ENCODE measurements at regions of chr11 and their contacts with region 1.

Region 1: DNA sequence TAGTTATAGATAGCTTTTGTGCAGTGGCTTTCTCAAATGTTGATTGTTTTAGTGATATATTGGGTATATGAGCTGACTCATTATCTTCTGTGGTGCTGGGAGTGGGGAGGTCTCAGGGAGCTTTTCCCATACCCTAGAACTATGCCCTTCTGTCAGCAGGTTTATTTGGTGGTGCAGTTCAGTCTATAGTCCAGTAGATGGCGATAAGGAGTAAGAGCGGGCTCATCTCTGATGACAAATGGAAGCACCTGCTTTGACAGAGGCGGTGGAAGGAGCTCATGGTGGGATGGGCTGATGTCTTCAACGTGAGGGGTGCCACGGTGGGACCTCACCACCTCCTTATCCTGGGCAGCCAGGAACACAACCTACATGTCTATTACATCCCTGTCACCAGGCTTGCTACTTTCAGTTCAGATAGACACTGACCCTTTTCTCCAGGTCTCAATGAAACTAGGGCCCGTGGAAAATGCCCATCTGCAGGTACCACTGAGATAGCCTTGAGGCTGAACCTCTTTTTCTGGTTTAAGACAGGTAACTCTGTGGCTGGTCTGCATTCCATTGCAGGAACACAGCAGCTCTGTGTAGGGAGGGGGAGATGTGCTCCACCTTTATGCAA is 13.0 kb upstream of the OR6A2 start:
- DNase-seq: no peak
- H3K4me3 ChIP-seq: no peak overlapping the region
- H3K27ac ChIP-seq: no peak overlapping the region
- H3K27me3 ChIP-seq: no peaks in the 10 kb centered on the region
- CTCF ChIP-seq: peak; percentile 98

Region 2: DNA sequence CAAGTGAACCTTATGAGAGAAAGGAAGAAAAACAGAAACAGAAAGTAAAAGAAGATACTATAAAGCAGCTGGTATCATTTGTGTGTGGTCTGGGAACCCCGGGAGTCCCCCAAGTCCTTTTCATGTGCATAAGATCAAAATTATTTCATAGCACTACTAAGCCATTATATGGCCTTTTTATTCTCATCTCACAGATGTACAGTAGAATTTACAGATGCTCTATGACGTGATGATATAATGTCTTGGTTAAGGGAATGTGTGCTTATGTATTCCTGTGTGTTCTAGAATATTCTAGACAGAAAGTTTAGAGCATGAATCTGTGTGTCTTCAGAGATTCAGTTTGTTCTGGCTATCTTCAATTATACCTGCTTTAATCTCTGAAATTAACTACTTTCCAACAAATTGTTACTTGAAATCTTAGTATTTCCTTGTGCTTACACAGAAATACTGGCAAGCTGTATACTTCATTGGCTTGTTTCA is 184.7 kb before region 1 on chr11:
- CTCF ChIA-PET with region 1: no interaction called
- POLR2A ChIA-PET with region 1: no interaction called
- DNase-seq: no peak
- H3K4me3 ChIP-seq: no peak overlapping the region
- H3K27ac ChIP-seq: no peak overlapping the region
- H3K27me3 ChIP-seq: no peaks in the 10 kb centered on the region
- CTCF ChIP-seq: no peak

Region 3: DNA sequence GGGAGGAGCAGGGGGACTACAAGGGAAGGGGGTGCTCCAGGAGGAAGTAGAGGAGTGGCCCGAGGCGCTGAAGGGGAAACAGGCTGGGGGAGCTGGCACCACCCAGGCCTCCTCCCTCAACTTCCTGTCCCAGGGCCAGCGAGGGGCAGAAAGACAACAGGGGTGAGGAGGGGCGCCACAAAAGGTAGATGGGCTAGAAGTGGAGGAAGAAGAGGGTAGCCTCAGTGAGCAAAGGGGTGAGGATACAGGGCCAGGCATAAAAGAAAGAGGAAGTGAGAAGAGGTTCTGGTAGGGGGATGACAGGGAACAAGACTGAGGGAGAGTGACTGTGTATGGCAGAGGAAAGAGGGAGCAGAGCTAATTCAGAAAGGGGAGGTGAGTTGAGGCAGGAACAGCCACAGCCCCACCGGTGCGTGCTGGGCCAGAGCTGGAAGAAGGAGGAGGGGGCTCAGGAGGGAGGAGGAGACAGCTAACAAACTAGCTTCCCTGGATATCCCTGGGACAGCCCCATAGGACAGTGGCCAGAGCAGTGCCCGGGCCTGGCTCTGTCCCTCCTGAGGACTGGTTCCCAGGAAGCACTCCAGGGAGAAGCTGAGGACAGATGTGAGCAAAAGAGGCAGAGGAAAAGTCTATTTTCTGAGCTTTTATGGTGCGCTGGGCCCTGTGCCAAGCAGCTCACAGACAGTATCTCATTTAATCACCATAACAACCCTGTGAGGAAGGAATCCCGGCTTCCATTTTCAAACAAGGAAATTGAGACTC is 165.4 kb before region 1 on chr11:
- CTCF ChIA-PET with region 1: no interaction called
- POLR2A ChIA-PET with region 1: no interaction called
- DNase-seq: no peak
- H3K4me3 ChIP-seq: no peak overlapping the region
- H3K27ac ChIP-seq: no peak overlapping the region
- H3K27me3 ChIP-seq: peaks cover 5% of the 10 kb centered on the region
- CTCF ChIP-seq: no peak

Region 4: DNA sequence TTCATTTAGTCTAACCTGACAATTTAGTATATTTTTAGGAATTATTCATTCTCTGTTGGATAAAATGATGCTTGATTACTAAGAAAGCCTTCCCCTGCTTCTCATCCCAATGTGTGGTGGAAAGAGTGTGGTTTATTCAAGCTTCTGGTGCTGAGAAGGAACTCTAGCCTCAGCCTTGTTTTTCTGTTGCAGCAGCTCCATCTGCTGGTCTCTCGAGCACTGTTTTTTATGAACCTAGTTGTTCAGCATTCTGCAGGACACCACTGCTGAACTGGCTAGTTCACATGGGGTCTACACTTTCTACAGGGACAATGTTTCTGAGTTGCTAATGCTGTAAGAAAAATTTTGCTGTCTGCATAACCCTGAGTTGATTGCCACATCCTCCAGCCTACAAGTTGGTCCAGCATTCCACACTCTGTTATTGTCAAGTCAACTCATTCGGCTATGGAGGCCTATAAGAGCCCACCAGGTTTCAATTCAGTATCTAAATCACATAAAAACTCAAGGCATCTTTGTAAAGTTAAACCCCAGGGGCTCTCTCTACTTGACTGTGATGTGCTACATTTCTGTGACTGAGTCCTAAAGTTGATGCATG is 55.0 kb before region 1 on chr11:
- CTCF ChIA-PET with region 1: interaction called, 10 read pairs
- POLR2A ChIA-PET with region 1: no interaction called
- DNase-seq: peak; percentile 15
- H3K4me3 ChIP-seq: no peak overlapping the region
- H3K27ac ChIP-seq: no peak overlapping the region
- H3K27me3 ChIP-seq: no peaks in the 10 kb centered on the region
- CTCF ChIP-seq: peak; percentile 74

Region 5: GRCh38 chr11:6799402-6799801 is 13.1 kb before region 1 on chr11 and contains the start of gene OR6A2:
- CTCF ChIA-PET with region 1: interaction called, 23 read pairs
- POLR2A ChIA-PET with region 1: no interaction called
- DNase-seq: no peak
- H3K4me3 ChIP-seq: no peak within 1 kb of the TSS
- H3K27ac ChIP-seq: no peak within 1 kb of the TSS
- H3K27me3 ChIP-seq: no peaks in the 10 kb centered on the region
- CTCF ChIP-seq: no peak
- polyA plus RNA-seq, gene OR6A2: 0.02 and 0.06 TPM in 2 replicates

Region 6: GRCh38 chr11:6862961-6863360 is 50.5 kb after region 1 on chr11 and contains the start of gene OR10A2:
- CTCF ChIA-PET with region 1: interaction called, 25 read pairs
- POLR2A ChIA-PET with region 1: no interaction called
- DNase-seq: no peak
- H3K4me3 ChIP-seq: no peak within 1 kb of the TSS
- H3K27ac ChIP-seq: no peak within 1 kb of the TSS
- H3K27me3 ChIP-seq: no peaks in the 10 kb centered on the region
- CTCF ChIP-seq: no peak
- polyA plus RNA-seq, gene OR10A2: not detected in 2 replicates

Region 7: GRCh38 chr11:7098235-7098832 is 285.8 kb after region 1 on chr11:
- CTCF ChIA-PET with region 1: interaction called, 16 read pairs
- POLR2A ChIA-PET with region 1: no interaction called
- DNase-seq: no peak
- H3K4me3 ChIP-seq: no peak overlapping the region
- H3K27ac ChIP-seq: no peak overlapping the region
- H3K27me3 ChIP-seq: no peaks in the 10 kb centered on the region
- CTCF ChIP-seq: peak; percentile 71

Region 8: DNA sequence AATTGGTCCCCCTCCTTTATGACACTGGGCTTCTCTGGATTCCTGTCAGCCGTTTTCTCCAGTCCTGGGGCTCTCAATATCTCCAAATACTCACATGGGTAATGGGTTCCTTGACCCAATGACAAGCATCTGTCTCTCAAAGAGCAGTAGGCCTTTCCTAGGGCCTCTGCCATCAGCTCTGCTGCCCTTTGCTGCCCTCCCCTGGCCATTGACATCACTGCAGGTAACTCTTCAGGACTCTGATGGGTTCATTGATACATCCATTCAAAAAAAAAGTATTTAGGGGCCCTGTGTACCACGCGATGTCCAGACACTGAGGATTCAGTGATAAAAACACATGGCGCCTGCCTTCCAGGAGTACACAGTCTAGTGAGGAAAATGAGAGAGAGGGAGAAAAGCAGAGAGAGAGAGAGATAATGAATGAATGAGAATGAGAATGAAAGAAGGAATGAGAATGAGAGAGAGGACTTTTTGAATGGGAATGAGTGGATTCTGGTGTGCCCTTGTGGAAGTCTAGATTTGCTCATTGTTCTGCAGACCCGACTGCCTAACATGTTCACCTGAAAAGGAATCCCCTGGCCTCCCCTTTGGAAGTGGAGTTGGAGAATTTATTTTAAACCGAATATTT is 630.2 kb after region 1 on chr11:
- CTCF ChIA-PET with region 1: interaction called, 10 read pairs
- POLR2A ChIA-PET with region 1: no interaction called
- DNase-seq: peak; percentile 2
- H3K4me3 ChIP-seq: no peak overlapping the region
- H3K27ac ChIP-seq: no peak overlapping the region
- H3K27me3 ChIP-seq: peaks cover 5% of the 10 kb centered on the region
- CTCF ChIP-seq: peak; percentile 86

Measured in AG04450 (cell line).